Natural killer cell (primary cell): ENCODE measurements at regions of chr17 and their contacts with region 1.

Region 1: GRCh38 chr17:49191917-49192741 is 18.2 kb downstream of the GNGT2 start:
- DNase-seq: peak; percentile 92
- ATAC-seq: peak; percentile 58 to 78 (median 64)
- H3K4me3 ChIP-seq: peak overlapping the region; percentile 87
- H3K4me3 Mint-ChIP-seq: peak overlapping the region; percentile 98
- H3K27ac ChIP-seq: peak overlapping the region; percentile 98
- H3K27ac Mint-ChIP-seq: peak overlapping the region; percentile 100
- H3K4me1 ChIP-seq: peaks cover 25% of the 10 kb centered on the region
- H3K4me1 Mint-ChIP-seq: peaks cover 32 to 40% of the 10 kb centered on the region in 2 donors
- H3K27me3 ChIP-seq: no peaks in the 10 kb centered on the region
- H3K27me3 Mint-ChIP-seq: peaks cover 0 to 2% of the 10 kb centered on the region in 2 donors
- CTCF ChIP-seq: peak; percentile 21

Region 2: GRCh38 chr17:48994549-48995303 is 197.4 kb before region 1 on chr17:
- intact Hi-C with region 1: no loop called
- DNase-seq: no peak
- ATAC-seq: no peak
- H3K4me3 ChIP-seq: no peak overlapping the region
- H3K4me3 Mint-ChIP-seq: peak overlapping the region; percentile 28
- H3K27ac ChIP-seq: no peak overlapping the region
- H3K27ac Mint-ChIP-seq: no peak overlapping the region
- H3K4me1 ChIP-seq: peaks cover 37% of the 10 kb centered on the region
- H3K4me1 Mint-ChIP-seq: peaks cover 13 to 31% of the 10 kb centered on the region in 2 donors
- H3K27me3 ChIP-seq: peaks cover 87% of the 10 kb centered on the region
- H3K27me3 Mint-ChIP-seq: peaks cover 67 to 75% of the 10 kb centered on the region in 2 donors
- CTCF ChIP-seq: no peak

Region 3: DNA sequence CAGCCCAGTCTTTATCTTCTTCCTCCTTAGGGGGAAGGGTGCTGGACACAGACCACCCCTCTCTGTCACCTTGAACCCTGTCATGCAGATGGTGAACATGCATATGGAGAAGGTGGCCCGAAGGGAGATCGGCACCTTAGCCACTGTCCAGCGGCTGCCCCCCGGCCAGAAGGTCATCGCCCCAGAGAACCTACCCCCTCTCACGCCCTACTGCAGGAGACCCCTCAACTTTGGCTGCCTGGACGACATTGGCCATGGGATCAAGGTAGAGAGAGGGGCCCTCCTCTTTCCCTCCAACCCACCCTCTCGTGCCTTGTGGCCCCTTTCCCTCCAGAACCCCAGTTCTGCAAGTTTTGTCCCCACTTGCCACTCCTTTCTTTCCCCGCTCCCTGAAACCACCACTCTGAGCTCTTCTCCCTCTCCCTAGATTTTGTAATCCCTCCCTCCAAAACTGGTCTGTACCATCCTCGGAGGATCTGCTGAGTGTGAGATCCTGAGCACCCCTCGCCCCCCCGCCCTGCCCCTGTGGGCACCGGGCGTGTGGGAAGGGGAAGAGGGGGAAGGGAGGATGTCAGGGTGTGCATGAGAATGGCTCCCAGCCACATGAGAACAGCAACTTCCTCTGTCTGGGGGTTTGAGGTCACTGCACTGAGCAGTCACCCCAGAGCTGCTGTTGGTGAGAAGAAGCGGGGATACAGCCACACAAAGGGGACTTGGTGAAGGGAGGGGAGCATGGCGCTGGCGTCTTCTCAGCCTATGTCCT is 25.7 kb after region 1 on chr17:
- intact Hi-C with region 1: loop called (anchors 1 kb)
- DNase-seq: peak; percentile 73 to 93
- ATAC-seq: peak; percentile 58 to 81 (median 75)
- H3K4me3 ChIP-seq: peak overlapping the region; percentile 6
- H3K4me3 Mint-ChIP-seq: peak overlapping the region; percentile 89
- H3K27ac ChIP-seq: peak overlapping the region; percentile 97
- H3K27ac Mint-ChIP-seq: peak overlapping the region; percentile 81 to 98
- H3K4me1 ChIP-seq: peaks cover 98% of the 10 kb centered on the region
- H3K4me1 Mint-ChIP-seq: peaks cover 63 to 83% of the 10 kb centered on the region in 2 donors
- H3K27me3 ChIP-seq: no peaks in the 10 kb centered on the region
- H3K27me3 Mint-ChIP-seq: no peaks in the 10 kb centered on the region
- CTCF ChIP-seq: no peak

Region 4: DNA sequence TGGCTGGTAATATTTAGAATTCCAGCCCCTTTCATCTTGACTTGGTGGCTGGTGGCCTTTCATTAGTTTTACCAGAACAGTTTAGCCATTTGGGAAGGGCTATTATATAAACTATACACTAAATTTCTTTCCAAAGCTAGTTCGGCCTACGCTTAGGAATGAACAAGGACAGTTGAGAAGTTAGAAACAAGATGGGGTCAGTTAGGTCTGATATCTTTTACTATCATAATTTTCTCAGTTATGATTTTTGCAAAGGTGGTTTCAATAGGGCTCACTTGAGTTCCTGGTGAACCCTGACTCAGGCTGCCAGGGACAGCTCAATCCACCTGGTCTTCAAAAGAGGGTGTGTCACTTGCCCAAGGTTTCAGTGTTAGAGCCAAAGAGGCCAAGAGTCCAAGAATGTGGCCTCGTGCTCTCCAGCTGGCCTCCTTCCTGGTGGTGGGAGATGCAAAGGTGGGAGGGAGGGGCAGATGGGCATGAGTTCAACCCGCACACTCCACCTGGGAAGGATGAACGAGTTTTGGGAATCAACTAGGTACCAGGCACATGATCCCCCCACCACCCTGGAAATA is 42.5 kb after region 1 on chr17:
- intact Hi-C with region 1: no loop called
- DNase-seq: no peak
- ATAC-seq: no peak
- H3K4me3 ChIP-seq: no peak overlapping the region
- H3K4me3 Mint-ChIP-seq: no peak overlapping the region
- H3K27ac ChIP-seq: no peak overlapping the region
- H3K27ac Mint-ChIP-seq: no peak overlapping the region
- H3K4me1 ChIP-seq: peaks cover 18% of the 10 kb centered on the region
- H3K4me1 Mint-ChIP-seq: peaks cover 9 to 20% of the 10 kb centered on the region in 2 donors
- H3K27me3 ChIP-seq: no peaks in the 10 kb centered on the region
- H3K27me3 Mint-ChIP-seq: peaks cover 0 to 3% of the 10 kb centered on the region in 2 donors
- CTCF ChIP-seq: no peak